ENCODE measurements at regions of chr9 and their contacts with region 1.

Region 1: DNA sequence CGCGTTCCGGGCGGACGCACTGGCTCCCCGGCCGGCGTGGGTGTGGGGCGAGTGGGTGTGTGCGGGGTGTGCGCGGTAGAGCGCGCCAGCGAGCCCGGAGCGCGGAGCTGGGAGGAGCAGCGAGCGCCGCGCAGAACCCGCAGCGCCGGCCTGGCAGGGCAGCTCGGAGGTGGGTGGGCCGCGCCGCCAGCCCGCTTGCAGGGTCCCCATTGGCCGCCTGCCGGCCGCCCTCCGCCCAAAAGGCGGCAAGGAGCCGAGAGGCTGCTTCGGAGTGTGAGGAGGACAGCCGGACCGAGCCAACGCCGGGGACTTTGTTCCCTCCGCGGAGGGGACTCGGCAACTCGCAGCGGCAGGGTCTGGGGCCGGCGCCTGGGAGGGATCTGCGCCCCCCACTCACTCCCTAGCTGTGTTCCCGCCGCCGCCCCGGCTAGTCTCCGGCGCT is at the start of gene DAPK1:
- DNase-seq: peak; percentile 84
- CTCF ChIP-seq: no peak

Region 2: GRCh38 chr9:87479801-87480201 is 17.8 kb before region 1 on chr9:
- CTCF ChIA-PET with region 1: interaction called, 12 read pairs
- POLR2A ChIA-PET with region 1: no interaction called
- DNase-seq: peak; percentile 75
- CTCF ChIP-seq: no peak

Region 3: DNA sequence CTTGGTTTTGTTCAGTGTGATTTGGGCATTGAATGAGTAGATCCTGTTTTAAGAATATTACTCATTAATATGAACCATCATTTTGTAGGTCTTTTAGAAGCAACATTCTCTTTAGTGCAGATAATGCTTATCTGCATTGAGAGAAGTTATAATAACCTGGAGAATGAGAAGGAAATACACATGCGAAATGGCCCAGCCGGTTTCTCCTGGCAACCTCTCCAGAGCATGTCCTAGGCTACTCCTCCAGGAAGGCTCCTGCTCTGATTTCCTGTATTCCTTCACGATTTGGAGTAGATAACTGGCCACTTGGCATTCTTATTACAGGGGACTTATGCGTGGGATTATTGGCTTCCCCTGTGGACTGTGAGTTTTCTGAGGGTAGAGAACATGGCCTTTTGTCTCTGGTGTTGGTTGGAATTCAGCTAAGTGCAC is 12.6 kb after region 1 on chr9:
- CTCF ChIA-PET with region 1: interaction called, 24 read pairs
- POLR2A ChIA-PET with region 1: interaction called, 3 read pairs
- DNase-seq: no peak
- CTCF ChIP-seq: no peak